AG04450 (cell line): ENCODE measurements at regions of chr5 and their contacts with region 1.

Region 1: DNA sequence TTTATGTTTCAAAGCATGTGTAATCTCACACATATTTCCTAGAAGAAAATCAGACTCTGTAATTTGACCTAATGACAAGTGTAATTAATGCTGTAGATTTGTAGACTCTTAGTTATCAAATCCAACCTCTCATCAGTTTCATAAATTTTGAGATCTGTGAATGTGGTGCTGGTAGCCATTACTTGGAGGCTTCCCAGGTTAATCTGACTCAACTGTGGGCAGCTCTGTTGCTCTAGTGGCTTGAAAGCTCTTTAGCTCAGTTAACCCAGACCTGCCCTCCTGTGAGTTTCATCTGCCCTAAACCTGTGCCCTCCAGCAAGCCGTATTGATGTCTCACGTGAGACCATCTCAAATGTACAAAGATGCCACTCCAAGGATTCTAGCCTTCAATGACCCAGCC is 323.4 kb downstream of the FBXL7 start:
- DNase-seq: no peak
- H3K4me3 ChIP-seq: no peak overlapping the region
- H3K27ac ChIP-seq: no peak overlapping the region
- H3K27me3 ChIP-seq: no peaks in the 10 kb centered on the region
- CTCF ChIP-seq: no peak

Region 2: GRCh38 chr5:15501091-15501791 is 322.2 kb before region 1 on chr5:
- CTCF ChIA-PET with region 1: interaction called, 14 read pairs
- POLR2A ChIA-PET with region 1: no interaction called
- DNase-seq: no peak
- H3K4me3 ChIP-seq: peak overlapping the region; percentile 81
- H3K27ac ChIP-seq: peak overlapping the region; percentile 49
- H3K27me3 ChIP-seq: no peaks in the 10 kb centered on the region
- CTCF ChIP-seq: peak; percentile 46

Region 3: DNA sequence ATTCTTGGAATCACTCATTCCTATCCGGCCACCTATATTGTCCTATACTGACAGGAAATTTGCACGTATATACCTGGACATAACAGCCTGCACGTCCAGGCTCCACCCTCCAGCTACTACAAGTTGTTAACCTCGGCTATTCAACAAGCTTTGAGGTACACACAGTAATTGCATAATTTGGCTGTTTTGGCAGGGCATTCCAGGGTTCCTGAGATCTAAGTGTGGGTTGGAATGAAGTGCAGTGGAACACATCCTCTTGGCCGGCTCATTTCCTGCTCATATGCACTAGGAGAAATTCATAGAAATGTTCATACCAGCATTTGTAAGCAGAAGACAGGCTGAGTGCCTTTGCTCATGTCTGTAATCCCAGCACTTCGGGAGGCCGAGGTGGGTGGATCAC is 101.1 kb before region 1 on chr5:
- CTCF ChIA-PET with region 1: no interaction called
- POLR2A ChIA-PET with region 1: no interaction called
- DNase-seq: no peak
- H3K4me3 ChIP-seq: no peak overlapping the region
- H3K27ac ChIP-seq: no peak overlapping the region
- H3K27me3 ChIP-seq: no peaks in the 10 kb centered on the region
- CTCF ChIP-seq: no peak

Region 4: GRCh38 chr5:15834596-15835245 is 11.3 kb after region 1 on chr5:
- CTCF ChIA-PET with region 1: interaction called, 13 read pairs
- POLR2A ChIA-PET with region 1: no interaction called
- DNase-seq: peak; percentile 37
- H3K4me3 ChIP-seq: no peak overlapping the region
- H3K27ac ChIP-seq: peak overlapping the region; percentile 34
- H3K27me3 ChIP-seq: no peaks in the 10 kb centered on the region
- CTCF ChIP-seq: no peak